Dendritic cell treated with granulocyte-macrophage colony-stimulating factor and Interleukin-4, amounts not matched to agents 40 ng/mL and 50 ng/mL, for 4 days (primary cell): ENCODE measurements at regions of chr12 and their contacts with region 1.

Region 1: GRCh38 chr12:132600048-132601032 is 10.0 kb downstream of the LRCOL1 start:
- H3K4me3 Mint-ChIP-seq: peak overlapping the region; percentile 72
- H3K27ac Mint-ChIP-seq: peak overlapping the region; percentile 17
- H3K4me1 Mint-ChIP-seq: peaks cover 26% of the 10 kb centered on the region
- H3K27me3 Mint-ChIP-seq: peaks cover 85% of the 10 kb centered on the region

Region 2: DNA sequence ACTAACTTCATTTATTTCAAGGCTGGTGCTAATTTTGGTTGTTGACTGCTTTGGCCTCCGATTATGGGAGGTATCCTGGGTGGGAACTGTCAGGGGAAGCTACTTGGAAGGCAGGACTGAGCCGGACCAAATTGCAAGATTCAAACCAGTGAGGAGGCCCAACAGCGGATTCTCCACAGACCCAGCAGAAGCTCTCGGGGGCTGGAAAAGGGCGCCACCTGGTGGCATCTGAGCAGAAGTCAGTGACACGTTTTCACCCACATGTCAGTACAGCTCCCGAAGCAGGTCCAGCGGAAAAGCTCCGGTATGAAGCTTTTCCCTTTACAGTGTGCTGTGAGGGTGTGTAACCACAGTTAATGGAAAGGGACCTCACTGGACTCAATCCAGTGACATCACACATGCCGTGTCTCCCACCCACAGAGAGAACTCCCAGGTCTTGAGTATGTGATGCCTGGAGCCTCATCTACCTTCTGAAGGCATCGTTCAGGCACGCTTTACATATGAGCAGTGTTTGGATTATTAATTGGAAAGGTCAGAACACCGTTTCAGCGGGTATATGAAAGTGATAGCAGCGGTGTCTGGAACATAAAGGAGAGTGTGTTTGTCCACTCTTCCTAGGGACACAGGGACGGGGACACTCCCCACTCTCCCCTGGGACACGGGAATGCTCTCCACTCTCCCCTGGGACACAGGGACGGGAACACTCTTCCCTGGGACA is 14.7 kb after region 1 on chr12:
- intact Hi-C with region 1: loop called (anchors 2 kb)
- H3K4me3 Mint-ChIP-seq: no peak overlapping the region
- H3K27ac Mint-ChIP-seq: no peak overlapping the region
- H3K4me1 Mint-ChIP-seq: peaks cover 14% of the 10 kb centered on the region
- H3K27me3 Mint-ChIP-seq: peaks cover 82% of the 10 kb centered on the region